Heart right ventricle (tissue), 16 donors: ENCODE measurements at regions of chr2 and their contacts with region 1.

Region 1: DNA sequence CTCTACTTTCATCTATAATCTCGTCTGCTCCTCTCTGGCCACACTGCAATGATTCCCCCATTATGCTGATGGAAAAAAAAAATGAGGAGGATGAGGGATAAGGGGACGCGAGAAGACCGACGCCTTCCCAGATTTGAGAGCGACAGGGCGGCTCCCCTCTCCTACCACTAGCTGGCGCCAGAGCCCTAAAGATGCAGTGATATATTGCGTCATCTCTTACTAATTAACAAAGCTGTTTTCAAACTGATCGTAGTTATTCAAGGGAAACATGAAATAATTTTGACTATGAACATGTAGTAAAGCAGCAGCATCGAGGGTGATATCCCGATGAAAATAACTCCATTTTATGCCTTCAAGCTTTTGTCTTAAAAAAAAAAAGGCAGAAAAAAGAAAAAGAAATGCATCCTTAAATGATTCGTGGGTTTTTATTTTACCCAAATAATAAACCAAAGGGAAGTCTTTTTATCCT is 48.0 kb upstream of the HNRNPA3 start:
- DNase-seq: peak; percentile 81 to 85
- ATAC-seq: peak; percentile 84 to 93 (median 92)
- H3K4me3 ChIP-seq: peak overlapping the region in 9 of 10 donors; percentile 21 to 64 (median 49)
- H3K27ac ChIP-seq: peak overlapping the region; percentile 74 to 90 (median 88)
- H3K4me1 ChIP-seq: peaks cover 8 to 33% (median 21%) of the 10 kb centered on the region in 9 donors
- H3K27me3 ChIP-seq: no peaks in the 10 kb centered on the region
- CTCF ChIP-seq: peak in 8 of 9 donors; percentile 96 to 100 (median 99)

Region 2: GRCh38 chr2:177207101-177207500 is 42.5 kb after region 1 on chr2:
- intact Hi-C with region 1: loop called in 6 of 10 experiments (anchors 1 to 5 kb)
- DNase-seq: no peak
- ATAC-seq: peak in 1 of 8 donors; percentile 26
- H3K4me3 ChIP-seq: no peak overlapping the region
- H3K27ac ChIP-seq: no peak overlapping the region
- H3K4me1 ChIP-seq: peaks cover 0 to 19% (median 12%) of the 10 kb centered on the region in 9 donors
- H3K27me3 ChIP-seq: no peaks in the 10 kb centered on the region
- CTCF ChIP-seq: no peak

Region 3: DNA sequence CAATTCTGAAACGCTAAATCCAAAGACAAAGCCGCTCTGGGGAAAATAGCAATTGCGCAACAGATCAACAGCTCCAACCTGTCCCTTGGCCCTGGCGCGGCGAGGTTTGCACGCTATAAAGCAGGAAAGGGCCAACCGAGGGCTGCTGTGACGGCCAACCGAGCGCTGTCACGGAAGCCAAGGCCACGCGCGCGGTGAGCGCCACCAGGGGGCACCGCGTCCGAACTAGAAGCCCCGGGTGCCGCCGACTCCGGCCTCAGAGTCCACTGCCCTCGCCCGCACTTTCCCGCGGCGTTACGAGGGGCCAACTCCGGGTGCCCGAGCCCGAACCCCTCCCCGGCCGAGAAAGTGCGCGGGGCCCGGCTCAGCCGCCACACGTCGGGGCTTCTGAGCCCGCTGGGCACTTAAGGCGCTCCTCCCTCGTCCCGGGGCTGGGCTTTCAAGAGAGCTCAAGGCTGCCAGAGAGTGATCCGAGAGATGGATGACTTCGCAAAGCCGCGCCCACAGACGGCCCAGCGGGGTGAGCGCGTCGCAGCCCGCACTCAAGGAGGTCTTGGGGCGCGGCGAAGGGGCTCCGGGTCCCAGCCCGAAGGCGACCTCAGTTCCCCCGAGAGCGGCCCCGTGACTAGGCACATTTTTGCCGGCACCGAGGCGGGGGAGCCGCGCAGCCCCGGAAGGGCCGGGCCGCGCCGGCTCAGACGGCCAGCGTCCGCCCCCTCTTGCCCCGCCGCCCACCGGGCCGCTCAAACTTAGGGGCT is 99.0 kb after region 1 on chr2:
- intact Hi-C with region 1: loop called in 9 of 10 experiments (anchors 1 to 10 kb)
- DNase-seq: peak; percentile 99
- ATAC-seq: peak; percentile 72 to 86 (median 80)
- H3K4me3 ChIP-seq: peak overlapping the region; percentile 79 to 97 (median 94)
- H3K27ac ChIP-seq: peak overlapping the region; percentile 96 to 100 (median 100)
- H3K4me1 ChIP-seq: peaks cover 3 to 55% (median 50%) of the 10 kb centered on the region in 9 donors
- H3K27me3 ChIP-seq: no peaks in the 10 kb centered on the region
- CTCF ChIP-seq: peak; percentile 76 to 98 (median 92)

Region 4: GRCh38 chr2:177325270-177325929 is 160.8 kb after region 1 on chr2:
- intact Hi-C with region 1: loop called in 4 of 10 experiments (anchors 2 to 5 kb)
- DNase-seq: no peak
- ATAC-seq: no peak
- H3K4me3 ChIP-seq: no peak overlapping the region
- H3K27ac ChIP-seq: no peak overlapping the region
- H3K4me1 ChIP-seq: peaks cover 0 to 13% (median 0%) of the 10 kb centered on the region in 9 donors
- H3K27me3 ChIP-seq: no peaks in the 10 kb centered on the region
- CTCF ChIP-seq: no peak

Region 5: GRCh38 chr2:177604271-177605065 is 439.9 kb after region 1 on chr2:
- intact Hi-C with region 1: loop called in 2 of 10 experiments (anchors 10 kb)
- DNase-seq: peak in 1 of 2 donors; percentile 25
- ATAC-seq: peak in 7 of 8 donors; percentile 44 to 73 (median 66)
- H3K4me3 ChIP-seq: no peak overlapping the region
- H3K27ac ChIP-seq: peak overlapping the region in 2 of 10 donors; percentile 6 to 36
- H3K4me1 ChIP-seq: peaks cover 0 to 13% (median 3%) of the 10 kb centered on the region in 9 donors
- H3K27me3 ChIP-seq: no peaks in the 10 kb centered on the region
- CTCF ChIP-seq: peak; percentile 37 to 83 (median 67)

Region 6: GRCh38 chr2:177763532-177764265 is 599.1 kb after region 1 on chr2:
- intact Hi-C with region 1: loop called in 6 of 10 experiments (anchors 5 to 10 kb)
- DNase-seq: peak; percentile 60 to 74
- ATAC-seq: peak; percentile 80 to 91 (median 84)
- H3K4me3 ChIP-seq: peak overlapping the region in 1 of 10 donors; percentile 20
- H3K27ac ChIP-seq: no peak overlapping the region
- H3K4me1 ChIP-seq: peaks cover 0 to 11% (median 6%) of the 10 kb centered on the region in 9 donors
- H3K27me3 ChIP-seq: no peaks in the 10 kb centered on the region
- CTCF ChIP-seq: peak; percentile 77 to 92 (median 85)